ENCODE measurements at regions of chr17 and their contacts with region 1.

Region 1: GRCh38 chr17:40139566-40140058 is 725 bp upstream of the CASC3 start:
- DNase-seq: peak; percentile 20
- ATAC-seq: peak; percentile 19
- H3K4me3 Mint-ChIP-seq: peak overlapping the region; percentile 93
- H3K27ac Mint-ChIP-seq: peak overlapping the region; percentile 92
- H3K4me1 Mint-ChIP-seq: peaks cover 29% of the 10 kb centered on the region
- H3K27me3 Mint-ChIP-seq: no peaks in the 10 kb centered on the region
- CTCF ChIP-seq: no peak

Region 2: GRCh38 chr17:39461113-39461925 is 678.3 kb before region 1 on chr17 and contains the start of gene CDK12:
- CTCF ChIA-PET with region 1: no interaction called
- POLR2A ChIA-PET with region 1: interaction called, 5 read pairs
- intact Hi-C with region 1: loop called (anchors 2 kb)
- DNase-seq: peak; percentile 87
- ATAC-seq: peak; percentile 87
- H3K4me3 Mint-ChIP-seq: peak within 1 kb of the TSS; percentile 97
- H3K27ac Mint-ChIP-seq: peak within 1 kb of the TSS; percentile 98
- H3K4me1 Mint-ChIP-seq: peaks cover 50% of the 10 kb centered on the region
- H3K27me3 Mint-ChIP-seq: no peaks in the 10 kb centered on the region
- CTCF ChIP-seq: no peak
- total RNA-seq, gene CDK12: 100 and 118 TPM in 2 replicates

Region 3: GRCh38 chr17:39894681-39895376 is 244.8 kb before region 1 on chr17:
- CTCF ChIA-PET with region 1: no interaction called
- POLR2A ChIA-PET with region 1: no interaction called
- intact Hi-C with region 1: no loop called
- DNase-seq: no peak
- ATAC-seq: no peak
- H3K4me3 Mint-ChIP-seq: no peak overlapping the region
- H3K27ac Mint-ChIP-seq: peak overlapping the region; percentile 47
- H3K4me1 Mint-ChIP-seq: peaks cover 13% of the 10 kb centered on the region
- H3K27me3 Mint-ChIP-seq: no peaks in the 10 kb centered on the region
- CTCF ChIP-seq: no peak

Region 4: DNA sequence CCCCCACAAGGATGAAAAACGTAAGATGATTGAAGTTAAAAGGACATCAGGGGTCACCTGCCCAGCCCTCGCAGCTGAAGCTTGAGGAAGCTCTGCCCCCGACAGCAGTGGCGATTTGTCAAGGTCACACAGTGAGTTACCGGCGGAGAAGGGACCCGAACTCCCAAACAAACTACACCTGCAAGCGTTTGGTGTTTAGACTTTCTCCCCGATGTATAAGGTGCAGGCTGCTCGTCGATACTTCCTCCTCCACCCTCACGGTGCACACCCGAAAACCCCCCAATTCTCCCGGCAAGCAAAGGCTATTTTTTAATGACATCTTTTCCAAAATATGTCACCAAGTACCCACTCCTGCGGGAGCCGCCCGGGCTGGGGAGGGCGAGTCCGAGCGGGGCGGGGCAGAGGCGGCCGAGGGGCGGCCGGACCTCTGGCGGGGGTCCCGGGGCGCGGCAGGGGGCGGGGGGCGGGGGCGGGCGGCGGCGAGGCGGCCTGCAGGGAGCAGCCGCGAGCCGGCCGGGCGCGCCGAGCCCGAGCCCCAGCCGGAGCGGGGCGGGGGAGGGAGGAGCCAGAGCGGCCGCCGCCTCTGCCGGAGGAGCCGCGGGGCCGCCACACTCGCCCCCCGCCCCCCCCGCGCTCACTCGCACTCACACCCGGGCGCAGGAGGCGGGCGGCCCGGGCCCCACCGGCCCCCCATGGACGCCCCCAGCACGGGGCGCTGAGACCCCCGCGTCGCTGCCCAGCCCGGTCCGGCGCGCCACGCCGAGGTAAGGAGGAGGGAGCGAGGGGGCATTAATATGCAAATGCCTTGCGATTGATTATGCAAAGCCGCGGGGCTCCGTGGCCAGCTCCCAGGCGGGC is 77.1 kb before region 1 on chr17 and contains the start of gene THRA:
- CTCF ChIA-PET with region 1: no interaction called
- POLR2A ChIA-PET with region 1: interaction called, 5 read pairs
- intact Hi-C with region 1: loop called (anchors 1 kb)
- DNase-seq: peak; percentile 79
- ATAC-seq: peak; percentile 93
- H3K4me3 Mint-ChIP-seq: peak within 1 kb of the TSS; percentile 87
- H3K27ac Mint-ChIP-seq: peak within 1 kb of the TSS; percentile 78
- H3K4me1 Mint-ChIP-seq: peaks cover 39% of the 10 kb centered on the region
- H3K27me3 Mint-ChIP-seq: peaks cover under 1% of the 10 kb centered on the region
- CTCF ChIP-seq: no peak
- total RNA-seq, gene THRA: 5.4 and 5.9 TPM in 2 replicates

Region 5: DNA sequence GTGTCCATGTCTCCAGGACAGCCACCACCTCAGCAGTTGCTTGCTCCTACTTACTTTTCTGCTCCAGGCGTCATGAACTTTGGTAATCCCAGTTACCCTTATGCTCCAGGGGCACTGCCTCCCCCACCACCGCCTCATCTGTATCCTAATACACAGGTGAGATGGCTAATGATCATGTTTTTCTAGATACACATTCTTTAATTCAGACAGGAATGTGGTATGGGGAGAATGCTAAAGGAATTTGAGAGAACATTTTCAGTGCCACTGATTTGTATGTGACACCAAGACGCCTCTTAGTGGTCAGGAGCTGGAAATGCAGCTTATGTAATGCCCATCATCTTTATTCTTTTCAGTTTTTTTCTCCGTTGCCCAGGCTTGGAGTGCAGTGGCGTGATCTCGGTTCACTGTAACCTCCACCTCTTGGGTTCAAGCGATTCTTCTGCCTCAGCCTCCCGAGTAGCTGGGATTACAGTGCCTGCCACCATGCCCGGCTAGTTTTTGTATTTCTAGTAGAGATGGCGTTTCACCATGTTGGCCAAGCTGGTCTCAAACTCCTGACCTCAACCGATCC is 28.7 kb after region 1 on chr17:
- CTCF ChIA-PET with region 1: interaction called, 6 read pairs
- POLR2A ChIA-PET with region 1: interaction called, 37 read pairs
- intact Hi-C with region 1: no loop called
- DNase-seq: no peak
- ATAC-seq: peak; percentile 85
- H3K4me3 Mint-ChIP-seq: no peak overlapping the region
- H3K27ac Mint-ChIP-seq: no peak overlapping the region
- H3K4me1 Mint-ChIP-seq: no peaks in the 10 kb centered on the region
- H3K27me3 Mint-ChIP-seq: no peaks in the 10 kb centered on the region
- CTCF ChIP-seq: no peak

Region 6: GRCh38 chr17:41930009-41930832 is 1790.6 kb after region 1 on chr17 and contains the start of gene ODAD4:
- CTCF ChIA-PET with region 1: no interaction called
- POLR2A ChIA-PET with region 1: interaction called, 11 read pairs
- intact Hi-C with region 1: no loop called
- DNase-seq: peak; percentile 89
- ATAC-seq: peak; percentile 98
- H3K4me3 Mint-ChIP-seq: peak within 1 kb of the TSS; percentile 94
- H3K27ac Mint-ChIP-seq: peak within 1 kb of the TSS; percentile 97
- H3K4me1 Mint-ChIP-seq: peaks cover 38% of the 10 kb centered on the region
- H3K27me3 Mint-ChIP-seq: no peaks in the 10 kb centered on the region
- CTCF ChIP-seq: no peak
- total RNA-seq, gene ODAD4: 0.56 and 1.1 TPM in 2 replicates